ENCODE measurements at regions of chr6 and their contacts with region 1.

Region 1: GRCh38 chr6:21593412-21593926 is at the start of gene SOX4:
- DNase-seq: peak; percentile 96
- H3K4me3 ChIP-seq: peak within 1 kb of the TSS; percentile 73 to 79
- H3K27ac ChIP-seq: peak within 1 kb of the TSS; percentile 91
- H3K4me1 ChIP-seq: no peaks in the 10 kb centered on the region
- H3K27me3 ChIP-seq: no peaks in the 10 kb centered on the region
- CTCF ChIP-seq: no peak
- POLR2A ChIP-seq: peak; percentile 94
- total RNA-seq, gene SOX4: 41.7 to 44.1 TPM

Region 2: GRCh38 chr6:20564269-20564668 is 1029.2 kb before region 1 on chr6:
- intact Hi-C with region 1: loop called (anchors 2 kb)
- DNase-seq: no peak
- H3K4me3 ChIP-seq: no peak overlapping the region
- H3K27ac ChIP-seq: no peak overlapping the region
- H3K4me1 ChIP-seq: no peaks in the 10 kb centered on the region
- H3K27me3 ChIP-seq: no peaks in the 10 kb centered on the region
- CTCF ChIP-seq: peak in 3 of 4 experiments; percentile 54 to 64 (median 58)
- POLR2A ChIP-seq: no peak

Region 3: DNA sequence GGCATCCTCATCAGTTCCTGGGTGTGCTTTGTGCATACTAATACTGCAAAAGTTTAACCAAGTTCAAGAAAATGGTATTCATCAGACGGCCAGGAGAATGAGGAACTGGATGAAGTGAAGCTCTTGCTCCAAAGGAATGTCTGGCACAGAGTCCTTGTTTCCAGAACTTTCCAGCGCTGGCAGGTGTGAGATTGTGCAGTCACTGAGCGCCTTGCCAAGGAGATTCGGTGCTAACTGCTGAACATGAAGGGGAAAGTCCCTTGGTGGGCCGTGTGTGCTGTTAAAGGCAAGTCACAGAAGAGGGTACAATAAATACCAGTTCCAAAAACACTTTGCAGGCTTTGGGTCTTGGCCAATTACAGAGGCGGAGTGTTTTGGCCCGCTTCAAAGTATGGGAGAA is 262.2 kb before region 1 on chr6:
- intact Hi-C with region 1: loop called (anchors 10 kb)
- DNase-seq: peak; percentile 9
- H3K4me3 ChIP-seq: no peak overlapping the region
- H3K27ac ChIP-seq: no peak overlapping the region
- H3K4me1 ChIP-seq: no peaks in the 10 kb centered on the region
- H3K27me3 ChIP-seq: no peaks in the 10 kb centered on the region
- CTCF ChIP-seq: no peak
- POLR2A ChIP-seq: no peak

Region 4: DNA sequence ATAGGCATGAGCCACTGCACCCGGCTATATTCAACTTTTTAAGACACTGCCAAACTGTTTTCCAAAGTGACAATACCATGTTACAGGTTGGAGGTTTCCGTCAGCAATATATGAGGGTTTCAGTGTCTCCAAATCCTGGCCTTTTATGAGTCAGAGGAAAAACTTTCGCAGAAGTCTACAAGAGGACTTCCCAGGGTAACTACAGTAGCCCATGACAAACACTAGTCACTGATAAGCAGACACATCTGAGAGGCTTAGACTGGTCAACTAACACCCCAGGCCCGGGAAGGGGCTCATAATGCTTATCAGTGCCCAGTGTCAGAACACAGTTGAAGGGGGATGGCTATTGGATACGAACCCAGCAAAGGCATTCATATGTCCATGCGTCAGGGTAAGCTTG is 85.5 kb after region 1 on chr6:
- intact Hi-C with region 1: no loop called
- DNase-seq: no peak
- H3K4me3 ChIP-seq: no peak overlapping the region
- H3K27ac ChIP-seq: no peak overlapping the region
- H3K4me1 ChIP-seq: no peaks in the 10 kb centered on the region
- H3K27me3 ChIP-seq: no peaks in the 10 kb centered on the region
- CTCF ChIP-seq: no peak
- POLR2A ChIP-seq: no peak

Region 5: DNA sequence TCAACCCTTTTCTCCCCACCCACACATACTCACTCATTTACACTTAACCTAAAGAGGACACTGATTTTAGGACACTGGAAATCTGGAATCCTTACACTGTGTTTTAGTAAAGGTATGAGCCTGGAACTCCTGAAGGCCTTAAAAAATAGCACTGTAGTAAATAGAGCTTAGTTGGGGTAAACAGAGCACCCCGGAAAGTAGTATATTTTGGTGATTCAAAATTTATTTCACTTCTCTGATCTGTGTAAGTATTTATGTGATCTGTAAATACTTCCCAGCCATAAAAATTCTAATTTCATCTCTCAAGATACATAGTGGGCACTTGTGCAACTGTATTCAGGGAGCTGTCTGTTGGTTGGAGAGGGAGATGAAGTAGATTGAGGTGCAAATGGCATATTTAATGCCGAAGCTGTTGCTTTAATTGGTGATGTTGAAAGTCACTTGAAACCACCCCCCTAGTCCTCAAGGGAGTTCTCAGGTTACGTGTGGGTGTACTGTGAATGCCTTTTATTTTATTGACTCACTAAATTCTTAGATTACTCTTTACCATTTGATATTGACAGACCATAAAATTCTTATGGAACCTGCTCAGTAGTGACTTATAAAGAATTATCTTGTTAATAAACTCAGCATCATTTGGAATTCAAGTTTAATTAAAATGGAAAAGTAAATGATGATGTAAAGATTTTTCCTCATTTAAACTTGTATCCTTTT is 155.0 kb after region 1 on chr6:
- intact Hi-C with region 1: loop called (anchors 10 kb)
- DNase-seq: no peak
- H3K4me3 ChIP-seq: no peak overlapping the region
- H3K27ac ChIP-seq: no peak overlapping the region
- H3K4me1 ChIP-seq: no peaks in the 10 kb centered on the region
- H3K27me3 ChIP-seq: no peaks in the 10 kb centered on the region
- CTCF ChIP-seq: no peak
- POLR2A ChIP-seq: no peak

Region 6: DNA sequence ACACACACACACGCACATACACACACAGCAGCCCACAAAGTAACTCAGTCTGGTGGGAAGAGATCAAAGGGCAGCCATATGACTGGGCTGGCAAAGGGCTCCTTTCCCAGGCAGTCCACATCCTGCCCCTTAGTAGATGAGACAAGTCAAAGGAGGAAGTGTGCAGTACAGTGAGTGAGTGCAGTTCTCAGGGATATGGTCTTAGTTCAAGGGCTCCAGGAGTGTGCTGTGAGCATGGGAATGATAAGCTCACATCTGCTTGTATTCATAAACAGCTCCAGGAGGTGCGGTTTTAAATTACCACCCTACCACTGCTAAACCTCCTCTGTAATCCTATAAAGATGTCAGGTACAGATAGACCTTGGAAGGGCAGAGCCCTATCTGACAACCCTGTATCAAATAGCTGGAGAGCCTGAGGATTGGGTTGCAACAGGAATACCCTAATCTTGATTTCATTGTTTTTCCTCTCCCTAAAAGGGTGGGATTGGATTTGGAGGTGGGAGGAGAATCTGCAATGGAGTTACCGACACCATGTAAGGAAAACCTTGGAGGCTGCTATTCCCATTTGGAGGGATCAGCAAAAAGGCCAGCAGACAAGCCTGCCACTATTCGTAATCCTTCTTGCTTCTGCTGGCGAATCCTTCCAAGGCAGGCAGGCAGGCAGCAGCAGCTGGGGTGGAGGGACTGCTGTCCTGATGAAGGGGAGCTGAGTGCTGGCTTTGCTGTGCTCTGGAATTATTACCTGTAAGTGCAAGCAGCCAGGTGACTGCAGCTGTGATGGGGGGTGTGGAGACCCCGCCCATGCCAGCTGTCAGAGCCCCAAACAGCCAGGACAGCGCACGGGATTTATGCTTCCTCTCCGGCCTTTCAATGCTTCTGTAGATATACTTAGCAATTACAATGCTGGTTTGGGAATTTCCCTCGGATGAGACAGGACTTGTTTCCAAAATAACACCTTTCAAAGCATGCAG is 360.6 kb after region 1 on chr6:
- intact Hi-C with region 1: loop called (anchors 10 kb)
- DNase-seq: peak; percentile 12
- H3K4me3 ChIP-seq: no peak overlapping the region
- H3K27ac ChIP-seq: peak overlapping the region; percentile 11 to 52
- H3K4me1 ChIP-seq: peaks cover 12% of the 10 kb centered on the region
- H3K27me3 ChIP-seq: no peaks in the 10 kb centered on the region
- CTCF ChIP-seq: no peak
- POLR2A ChIP-seq: no peak

Region 7: GRCh38 chr6:22737331-22737730 is 1143.9 kb after region 1 on chr6:
- intact Hi-C with region 1: loop called (anchors 10 kb)
- DNase-seq: peak; percentile 5
- H3K4me3 ChIP-seq: no peak overlapping the region
- H3K27ac ChIP-seq: no peak overlapping the region
- H3K4me1 ChIP-seq: no peaks in the 10 kb centered on the region
- H3K27me3 ChIP-seq: no peaks in the 10 kb centered on the region
- CTCF ChIP-seq: peak in 1 of 4 experiments; percentile 17
- POLR2A ChIP-seq: no peak

Region 8: GRCh38 chr6:23446394-23447046 is 1853.1 kb after region 1 on chr6:
- intact Hi-C with region 1: loop called (anchors 10 kb)
- DNase-seq: no peak
- H3K4me3 ChIP-seq: no peak overlapping the region
- H3K27ac ChIP-seq: no peak overlapping the region
- H3K4me1 ChIP-seq: no peaks in the 10 kb centered on the region
- H3K27me3 ChIP-seq: no peaks in the 10 kb centered on the region
- CTCF ChIP-seq: peak in 3 of 4 experiments; percentile 14 to 34 (median 26)
- POLR2A ChIP-seq: no peak

Measured in prostate gland (tissue), 2 donors.